CD4-positive, alpha-beta memory T cell (primary cell): ENCODE measurements at regions of chr2 and their contacts with region 1.

Region 1: GRCh38 chr2:68506170-68506569 is 38.8 kb downstream of the APLF start:
- DNase-seq: peak in 2 of 5 donors; percentile 13 to 22
- H3K4me3 ChIP-seq: peak overlapping the region in 1 of 2 donors; percentile 17
- H3K4me3 Mint-ChIP-seq: peak overlapping the region; percentile 4 to 80 (median 64)
- H3K27ac ChIP-seq: no peak overlapping the region
- H3K27ac Mint-ChIP-seq: peak overlapping the region; percentile 25 to 87 (median 74)
- H3K4me1 ChIP-seq: peaks cover 27% of the 10 kb centered on the region
- H3K4me1 Mint-ChIP-seq: peaks cover 17 to 27% (median 22%) of the 10 kb centered on the region in 4 donors
- H3K27me3 ChIP-seq: no peaks in the 10 kb centered on the region
- H3K27me3 Mint-ChIP-seq: no peaks in the 10 kb centered on the region

Region 2: DNA sequence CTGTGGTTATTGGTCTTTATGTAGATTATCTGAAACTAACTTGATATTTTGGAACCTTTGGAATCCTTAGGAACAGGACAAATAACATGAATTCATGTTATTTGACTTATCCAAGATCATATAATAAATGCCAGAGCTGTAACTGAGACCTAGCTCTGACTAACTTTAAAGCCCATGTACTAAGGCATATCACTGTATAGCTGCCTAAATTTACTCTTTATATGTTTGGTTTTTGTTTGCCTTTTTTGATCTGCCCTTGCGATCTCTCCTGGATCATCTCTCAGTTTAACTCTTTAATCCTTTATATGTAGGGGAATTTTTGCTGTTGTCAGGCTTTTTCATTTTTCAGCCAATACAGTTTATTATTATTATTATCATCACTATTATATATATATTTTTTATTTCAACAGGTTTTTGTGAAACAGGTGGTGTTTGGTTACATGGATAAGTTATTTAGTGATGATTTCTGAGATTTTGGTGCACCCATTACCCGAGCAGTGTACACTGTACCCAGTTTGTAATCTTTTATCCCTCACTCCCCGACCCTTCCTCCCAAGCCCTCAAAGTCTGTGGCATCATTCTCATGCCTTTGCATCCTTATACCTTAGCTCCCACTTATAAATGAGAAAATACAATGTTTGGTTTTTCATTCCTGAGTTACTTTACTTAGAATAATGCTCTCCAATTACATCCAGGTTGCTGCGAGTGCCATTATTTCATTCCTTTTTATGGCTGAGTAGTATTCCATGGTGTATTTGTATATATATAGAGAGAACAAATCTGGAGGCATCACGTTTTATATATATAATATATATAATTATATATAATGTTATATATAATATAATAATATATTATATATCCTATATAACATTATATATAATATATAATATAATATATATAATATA is 10.1 kb after region 1 on chr2:
- CTCF ChIA-PET with region 1: interaction called, 3 read pairs
- POLR2A ChIA-PET with region 1: interaction called, 12 read pairs
- intact Hi-C with region 1: no loop called
- DNase-seq: no peak
- H3K4me3 ChIP-seq: no peak overlapping the region
- H3K4me3 Mint-ChIP-seq: no peak overlapping the region
- H3K27ac ChIP-seq: no peak overlapping the region
- H3K27ac Mint-ChIP-seq: peak overlapping the region in 1 of 7 donors; percentile 70
- H3K4me1 ChIP-seq: no peaks in the 10 kb centered on the region
- H3K4me1 Mint-ChIP-seq: peaks cover 0 to 1% (median under 1%) of the 10 kb centered on the region in 4 donors
- H3K27me3 ChIP-seq: no peaks in the 10 kb centered on the region
- H3K27me3 Mint-ChIP-seq: no peaks in the 10 kb centered on the region

Region 3: DNA sequence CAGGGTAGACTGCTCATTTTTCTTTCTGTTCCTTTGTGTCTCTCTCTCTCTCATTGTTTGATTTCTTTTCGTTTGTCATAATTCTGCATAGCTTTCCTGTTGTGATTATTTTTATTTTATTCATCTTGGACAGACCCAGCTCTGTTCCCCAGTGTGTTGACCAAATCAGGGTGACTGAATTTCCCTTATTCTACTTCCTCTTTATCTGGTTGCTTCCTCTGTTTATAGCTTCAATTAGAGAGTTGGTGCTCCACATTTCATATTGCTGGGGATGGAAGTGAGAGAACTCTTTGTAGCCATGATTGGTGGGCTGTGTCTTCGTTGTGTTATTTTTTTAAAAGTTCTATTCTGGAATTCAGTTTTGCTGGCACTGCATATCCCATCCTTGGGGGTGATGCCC is 156.3 kb after region 1 on chr2:
- CTCF ChIA-PET with region 1: no interaction called
- POLR2A ChIA-PET with region 1: no interaction called
- intact Hi-C with region 1: no loop called
- DNase-seq: no peak
- H3K4me3 ChIP-seq: no peak overlapping the region
- H3K4me3 Mint-ChIP-seq: no peak overlapping the region
- H3K27ac ChIP-seq: no peak overlapping the region
- H3K27ac Mint-ChIP-seq: no peak overlapping the region
- H3K4me1 ChIP-seq: no peaks in the 10 kb centered on the region
- H3K4me1 Mint-ChIP-seq: no peaks in the 10 kb centered on the region
- H3K27me3 ChIP-seq: no peaks in the 10 kb centered on the region
- H3K27me3 Mint-ChIP-seq: peaks cover 15 to 23% of the 10 kb centered on the region in 2 donors